HCT116 (cell line): ENCODE measurements at regions of chr5 and their contacts with region 1.

Region 1: GRCh38 chr5:77143998-77144836 is 57.1 kb upstream of the ZBED3 start:
- DNase-seq: peak; percentile 56
- ATAC-seq: peak; percentile 85
- H3K4me3 ChIP-seq: no peak overlapping the region
- H3K27ac ChIP-seq: no peak overlapping the region
- H3K4me1 ChIP-seq: peaks cover 0 to 7% of the 10 kb centered on the region in 2 experiments; a peak in 1 of 4 replicates
- H3K27me3 ChIP-seq: no peaks in the 10 kb centered on the region
- CTCF ChIP-seq: peak; percentile 64 to 90 (median 86)
- POLR2A ChIP-seq: no peak
- RAD21 ChIP-seq: peak; percentile 83

Region 2: DNA sequence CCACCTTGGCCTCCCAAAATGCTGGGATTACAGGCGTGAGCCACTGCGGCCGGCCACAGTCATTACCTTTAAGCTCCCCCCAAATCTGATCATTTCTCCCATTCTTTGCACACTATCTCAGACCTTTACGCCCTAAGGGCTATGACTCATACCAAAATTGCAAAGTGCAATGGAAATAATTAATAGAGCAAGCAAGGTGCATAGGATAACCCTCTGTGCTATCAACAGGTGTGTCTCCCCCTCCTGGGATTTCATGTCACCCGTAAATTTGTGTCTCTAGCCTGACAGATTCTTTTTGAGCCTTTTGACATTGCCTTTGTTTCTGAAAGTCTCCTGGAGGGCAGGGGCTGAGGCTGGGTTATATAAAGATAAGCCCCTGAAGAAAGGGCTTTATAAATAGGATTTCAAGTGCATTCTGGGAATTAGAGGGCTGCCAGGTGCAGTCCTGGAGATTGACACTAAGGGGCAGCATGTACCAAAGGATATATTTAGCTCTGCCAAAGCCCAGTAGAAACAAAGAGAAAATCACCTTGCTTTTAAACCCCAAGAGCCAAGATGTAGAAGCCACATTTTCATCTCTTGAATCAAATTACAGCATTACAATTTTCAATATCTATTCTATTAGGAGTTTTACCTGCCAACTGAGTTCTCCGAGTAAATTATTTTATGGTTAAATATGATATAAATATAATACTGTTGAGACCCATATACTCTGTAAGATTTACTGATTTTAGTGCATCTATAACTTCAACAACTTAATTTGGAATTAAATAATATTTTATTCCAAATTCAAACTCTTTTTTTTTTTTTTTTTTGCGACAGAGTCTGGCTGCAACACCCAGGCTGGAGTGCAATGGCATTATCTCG is 276.2 kb before region 1 on chr5:
- CTCF ChIA-PET with region 1: no interaction called
- POLR2A ChIA-PET with region 1: no interaction called
- RAD21 ChIA-PET with region 1: no interaction called
- intact Hi-C with region 1: loop called (anchors 5 kb)
- DNase-seq: peak; percentile 63
- ATAC-seq: peak; percentile 89
- H3K4me3 ChIP-seq: no peak overlapping the region
- H3K27ac ChIP-seq: no peak overlapping the region
- H3K4me1 ChIP-seq: peaks cover 0 to 11% of the 10 kb centered on the region in 2 experiments; a peak in 3 of 4 replicates
- H3K27me3 ChIP-seq: no peaks in the 10 kb centered on the region
- CTCF ChIP-seq: peak; percentile 78 to 88 (median 82)
- POLR2A ChIP-seq: no peak
- RAD21 ChIP-seq: peak; percentile 89

Region 3: GRCh38 chr5:77129391-77129990 is 14.7 kb before region 1 on chr5:
- CTCF ChIA-PET with region 1: no interaction called
- POLR2A ChIA-PET with region 1: no interaction called
- RAD21 ChIA-PET with region 1: no interaction called
- intact Hi-C with region 1: no loop called
- DNase-seq: peak; percentile 16
- ATAC-seq: peak; percentile 79
- H3K4me3 ChIP-seq: no peak overlapping the region
- H3K27ac ChIP-seq: no peak overlapping the region
- H3K4me1 ChIP-seq: peaks cover 0 to 13% of the 10 kb centered on the region in 2 experiments; a peak in 2 of 4 replicates
- H3K27me3 ChIP-seq: no peaks in the 10 kb centered on the region
- CTCF ChIP-seq: peak in 2 of 3 experiments; percentile 63 to 73; a peak in 4 of 6 replicates
- POLR2A ChIP-seq: no peak
- RAD21 ChIP-seq: peak; percentile 49

Region 4: GRCh38 chr5:77204967-77205366 is 60.8 kb after region 1 on chr5:
- CTCF ChIA-PET with region 1: no interaction called
- POLR2A ChIA-PET with region 1: no interaction called
- RAD21 ChIA-PET with region 1: no interaction called
- intact Hi-C with region 1: no loop called
- DNase-seq: no peak
- ATAC-seq: no peak
- H3K4me3 ChIP-seq: no peak overlapping the region
- H3K27ac ChIP-seq: no peak overlapping the region
- H3K4me1 ChIP-seq: no peaks in the 10 kb centered on the region
- H3K27me3 ChIP-seq: no peaks in the 10 kb centered on the region
- CTCF ChIP-seq: no peak
- POLR2A ChIP-seq: no peak
- RAD21 ChIP-seq: no peak

Region 5: DNA sequence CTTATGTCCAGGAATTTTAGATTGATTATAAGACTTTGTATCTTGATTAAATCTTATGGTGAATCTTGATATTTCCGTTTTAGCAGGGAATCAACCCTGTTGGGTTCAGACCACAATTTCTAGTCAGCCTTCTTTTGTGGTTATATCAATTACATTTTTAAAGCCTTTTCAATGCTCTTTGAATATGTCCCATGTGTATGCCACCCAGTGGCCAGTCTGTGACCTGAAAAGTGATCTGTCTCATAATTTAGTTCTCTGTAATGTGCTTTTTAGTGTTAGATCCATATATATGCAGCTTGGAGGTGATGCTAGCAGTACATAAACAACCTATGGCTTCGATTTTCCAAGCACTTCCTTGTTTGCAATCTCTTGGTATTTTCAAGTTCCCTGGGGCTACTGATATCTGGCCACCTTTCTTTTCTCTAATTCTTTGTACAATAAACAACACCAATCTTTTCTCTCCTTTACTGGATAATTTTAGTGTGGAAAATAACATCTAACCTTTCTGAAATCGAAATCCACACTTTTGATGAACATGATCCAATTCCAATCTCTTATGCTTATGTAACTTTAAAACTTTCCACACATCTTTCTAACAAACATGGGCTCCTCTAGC is 95.0 kb after region 1 on chr5:
- CTCF ChIA-PET with region 1: interaction called, 3 read pairs
- POLR2A ChIA-PET with region 1: no interaction called
- RAD21 ChIA-PET with region 1: no interaction called
- intact Hi-C with region 1: loop called (anchors 1 kb)
- DNase-seq: peak; percentile 18
- ATAC-seq: peak; percentile 71
- H3K4me3 ChIP-seq: no peak overlapping the region
- H3K27ac ChIP-seq: no peak overlapping the region
- H3K4me1 ChIP-seq: no peaks in the 10 kb centered on the region
- H3K27me3 ChIP-seq: no peaks in the 10 kb centered on the region
- CTCF ChIP-seq: peak; percentile 42 to 54 (median 53); a peak in 5 of 6 replicates
- POLR2A ChIP-seq: no peak
- RAD21 ChIP-seq: peak; percentile 47

Region 6: DNA sequence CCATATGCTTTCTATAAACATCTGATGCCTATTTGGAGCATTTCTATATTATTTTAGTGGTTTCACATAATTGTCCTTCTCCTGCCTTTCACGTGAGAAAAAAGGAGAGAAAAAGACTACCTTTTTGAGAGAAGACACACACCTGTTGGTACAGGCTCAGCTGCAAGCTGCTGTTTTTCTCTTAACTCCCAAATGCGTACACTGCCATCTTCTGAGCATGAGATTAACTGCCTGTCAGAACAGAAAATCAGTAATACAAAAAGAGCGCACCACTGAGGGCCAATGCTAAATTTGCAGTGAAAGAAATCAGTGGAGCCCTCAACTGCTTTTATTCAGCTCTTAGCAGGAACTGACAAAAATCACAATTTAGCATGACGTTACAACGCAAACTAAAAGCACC is 293.0 kb after region 1 on chr5:
- CTCF ChIA-PET with region 1: interaction called, 3 read pairs
- POLR2A ChIA-PET with region 1: no interaction called
- RAD21 ChIA-PET with region 1: no interaction called
- intact Hi-C with region 1: loop called (anchors 10 kb)
- DNase-seq: peak; percentile 1
- ATAC-seq: no peak
- H3K4me3 ChIP-seq: no peak overlapping the region
- H3K27ac ChIP-seq: no peak overlapping the region
- H3K4me1 ChIP-seq: no peaks in the 10 kb centered on the region
- H3K27me3 ChIP-seq: no peaks in the 10 kb centered on the region
- CTCF ChIP-seq: peak in 2 of 3 experiments; percentile 27 to 32; a peak in 2 of 6 replicates
- POLR2A ChIP-seq: no peak
- RAD21 ChIP-seq: peak; percentile 37

Region 7: DNA sequence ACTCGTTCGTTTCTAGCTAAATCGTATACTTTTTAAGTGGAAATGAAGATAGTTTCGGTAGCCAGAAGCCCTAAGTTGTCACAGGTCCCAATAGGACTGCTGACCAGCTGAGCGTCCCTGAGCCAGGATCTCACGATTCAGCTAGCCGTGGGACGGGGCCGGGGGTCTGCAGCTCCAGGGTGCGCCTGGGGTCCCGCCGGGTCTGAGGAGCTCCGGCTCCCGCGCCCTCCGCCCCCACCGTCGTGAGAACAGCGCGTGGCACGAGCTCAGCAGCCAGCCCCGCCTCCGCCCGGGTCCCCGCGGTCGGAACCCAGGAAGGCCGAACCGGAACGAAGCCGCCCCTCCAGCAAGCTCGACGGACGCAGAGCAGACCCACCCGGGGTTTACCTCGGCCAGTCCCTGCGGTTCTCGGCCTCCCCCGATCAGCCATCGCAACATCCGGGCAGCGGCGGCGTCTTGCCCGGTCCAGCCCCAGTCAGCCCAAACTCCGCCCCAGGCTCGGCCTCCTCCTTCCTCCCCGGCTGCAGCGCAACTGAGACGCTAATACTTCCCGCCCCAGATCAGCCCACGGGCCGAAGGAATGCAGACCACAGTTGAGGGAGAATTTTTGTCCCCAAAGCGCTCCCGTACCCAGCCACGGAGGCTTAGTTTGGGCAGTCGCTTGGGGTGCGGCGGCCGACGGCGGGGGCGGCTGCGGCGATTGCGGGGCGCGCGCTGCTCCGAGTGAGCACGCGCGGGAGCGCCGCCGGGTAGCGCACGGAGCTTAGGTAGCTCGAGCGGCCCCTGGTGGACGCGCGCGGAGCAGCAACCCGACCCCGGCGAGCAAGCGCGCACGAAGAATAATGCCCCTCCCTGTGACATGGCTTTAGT is 347.8 kb after region 1 on chr5 and contains the start of gene WDR41:
- CTCF ChIA-PET with region 1: interaction called, 4 read pairs
- POLR2A ChIA-PET with region 1: no interaction called
- RAD21 ChIA-PET with region 1: no interaction called
- intact Hi-C with region 1: loop called (anchors 1 kb)
- DNase-seq: peak; percentile 85
- ATAC-seq: peak; percentile 94
- H3K4me3 ChIP-seq: peak within 1 kb of the TSS; percentile 73 to 78
- H3K27ac ChIP-seq: peak within 1 kb of the TSS; percentile 91
- H3K4me1 ChIP-seq: peaks cover 7 to 11% of the 10 kb centered on the region in 2 experiments; a peak in 3 of 4 replicates
- H3K27me3 ChIP-seq: no peaks in the 10 kb centered on the region
- CTCF ChIP-seq: peak; percentile 41 to 87 (median 81); a peak in 5 of 6 replicates
- POLR2A ChIP-seq: peak; percentile 39
- RAD21 ChIP-seq: peak; percentile 67
- total RNA-seq, gene WDR41: 54.1 TPM